HCT116 (cell line): ENCODE measurements at regions of chr11 and their contacts with region 1.

Region 1: GRCh38 chr11:447923-448731 is 2.0 kb upstream of the PTDSS2 start:
- DNase-seq: peak; percentile 80
- ATAC-seq: peak; percentile 70
- H3K4me3 ChIP-seq: peak overlapping the region; percentile 82 to 86
- H3K27ac ChIP-seq: peak overlapping the region; percentile 98
- H3K4me1 ChIP-seq: peaks cover 25 to 47% of the 10 kb centered on the region in 2 experiments
- H3K27me3 ChIP-seq: no peaks in the 10 kb centered on the region
- CTCF ChIP-seq: peak in 2 of 3 experiments; percentile 86 to 89; a peak in 4 of 6 replicates
- POLR2A ChIP-seq: peak; percentile 6
- RAD21 ChIP-seq: no peak

Region 2: DNA sequence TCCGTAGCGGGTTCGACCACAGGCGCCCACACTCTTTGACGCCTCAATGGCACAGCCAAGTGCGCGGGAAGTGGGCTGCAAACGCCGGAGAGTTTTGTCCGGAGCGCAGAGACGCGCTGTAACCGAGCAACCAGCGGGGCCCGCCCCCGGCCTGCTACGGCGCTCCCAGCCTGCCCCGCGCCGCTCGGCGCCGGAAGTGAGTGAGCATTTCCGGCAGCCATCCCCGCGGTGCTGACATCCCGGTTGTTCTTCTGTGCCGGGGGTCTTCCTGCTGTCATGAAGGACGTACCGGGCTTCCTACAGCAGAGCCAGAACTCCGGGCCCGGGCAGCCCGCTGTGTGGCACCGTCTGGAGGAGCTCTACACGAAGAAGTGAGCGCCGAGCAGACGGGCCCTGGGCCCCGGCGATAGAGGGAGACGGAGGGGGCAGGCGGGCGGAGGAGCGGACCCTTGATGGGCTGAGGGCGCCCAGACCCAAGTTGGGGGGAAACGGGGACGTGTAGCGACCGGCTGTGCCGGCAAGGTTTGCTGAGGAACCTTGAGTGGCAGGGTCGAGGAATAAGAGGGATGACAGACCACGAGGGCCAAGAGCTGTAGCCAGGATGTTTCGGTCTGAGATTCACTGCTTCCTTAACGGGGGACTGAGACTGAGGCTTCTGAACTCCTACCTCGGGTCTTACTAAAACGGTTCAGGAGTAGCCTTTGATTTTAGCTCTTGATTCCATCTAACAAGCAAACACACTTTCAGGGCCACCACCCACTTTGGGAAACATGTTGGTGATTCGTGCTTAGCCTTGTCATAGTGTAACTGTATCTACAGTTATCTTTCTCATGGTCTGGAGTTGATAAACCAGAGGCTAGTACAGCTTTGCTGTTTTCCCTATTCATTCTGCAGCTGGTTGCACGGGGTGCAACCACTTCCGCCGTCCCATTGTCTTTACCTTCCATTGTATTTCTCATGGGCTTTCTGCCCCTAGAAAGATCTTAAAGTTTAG is 211.1 kb before region 1 on chr11 and contains the start of gene PSMD13:
- CTCF ChIA-PET with region 1: no interaction called
- POLR2A ChIA-PET with region 1: no interaction called
- RAD21 ChIA-PET with region 1: no interaction called
- intact Hi-C with region 1: loop called (anchors 5 kb)
- DNase-seq: peak; percentile 56
- ATAC-seq: peak; percentile 88
- H3K4me3 ChIP-seq: peak within 1 kb of the TSS; percentile 76 to 94
- H3K27ac ChIP-seq: peak within 1 kb of the TSS; percentile 92
- H3K4me1 ChIP-seq: peaks cover 6 to 20% of the 10 kb centered on the region in 2 experiments; a peak in 3 of 4 replicates
- H3K27me3 ChIP-seq: no peaks in the 10 kb centered on the region
- CTCF ChIP-seq: no peak
- POLR2A ChIP-seq: peak; percentile 7
- RAD21 ChIP-seq: no peak
- total RNA-seq, gene PSMD13: 179 TPM

Region 3: GRCh38 chr11:304915-305843 is 142.9 kb before region 1 on chr11:
- CTCF ChIA-PET with region 1: interaction called, 10 read pairs
- POLR2A ChIA-PET with region 1: no interaction called
- RAD21 ChIA-PET with region 1: no interaction called
- intact Hi-C with region 1: loop called (anchors 1 kb)
- DNase-seq: no peak
- ATAC-seq: peak; percentile 46; the same call in 1 of the 2 replicates
- H3K4me3 ChIP-seq: no peak overlapping the region
- H3K27ac ChIP-seq: no peak overlapping the region
- H3K4me1 ChIP-seq: peaks cover 13 to 24% of the 10 kb centered on the region in 2 experiments
- H3K27me3 ChIP-seq: no peaks in the 10 kb centered on the region
- CTCF ChIP-seq: peak; percentile 64 to 68 (median 67); a peak in 5 of 6 replicates
- POLR2A ChIP-seq: no peak
- RAD21 ChIP-seq: peak; percentile 79

Region 4: DNA sequence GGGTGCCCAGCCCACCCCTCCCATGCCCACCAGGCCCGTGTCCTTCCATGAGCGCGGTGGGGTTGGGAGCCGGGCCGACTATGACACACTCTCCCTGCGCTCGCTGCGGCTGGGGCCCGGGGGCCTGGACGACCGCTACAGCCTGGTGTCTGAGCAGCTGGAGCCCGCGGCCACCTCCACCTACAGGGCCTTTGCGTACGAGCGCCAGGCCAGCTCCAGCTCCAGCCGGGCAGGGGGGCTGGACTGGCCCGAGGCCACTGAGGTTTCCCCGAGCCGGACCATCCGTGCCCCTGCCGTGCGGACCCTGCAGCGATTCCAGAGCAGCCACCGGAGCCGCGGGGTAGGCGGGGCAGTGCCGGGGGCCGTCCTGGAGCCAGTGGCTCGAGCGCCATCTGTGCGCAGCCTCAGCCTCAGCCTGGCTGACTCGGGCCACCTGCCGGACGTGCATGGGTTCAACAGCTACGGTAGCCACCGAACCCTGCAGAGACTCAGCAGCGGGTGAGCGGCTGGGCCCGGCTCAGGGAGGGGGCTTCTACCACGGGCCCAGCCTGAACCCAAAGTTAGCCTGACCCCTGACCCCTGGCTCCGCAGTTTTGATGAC is 51.1 kb before region 1 on chr11:
- CTCF ChIA-PET with region 1: no interaction called
- POLR2A ChIA-PET with region 1: no interaction called
- RAD21 ChIA-PET with region 1: interaction called in 1 of 2 experiments, 3 read pairs
- intact Hi-C with region 1: loop called (anchors 1 kb)
- DNase-seq: no peak
- ATAC-seq: no peak
- H3K4me3 ChIP-seq: no peak overlapping the region
- H3K27ac ChIP-seq: peak overlapping the region; percentile 32; the same call in 1 of the 2 replicates
- H3K4me1 ChIP-seq: peaks cover 21 to 36% of the 10 kb centered on the region in 2 experiments
- H3K27me3 ChIP-seq: no peaks in the 10 kb centered on the region
- CTCF ChIP-seq: no peak
- POLR2A ChIP-seq: no peak
- RAD21 ChIP-seq: no peak

Region 5: GRCh38 chr11:406978-407739 is 41.0 kb before region 1 on chr11:
- CTCF ChIA-PET with region 1: interaction called, 31 read pairs
- POLR2A ChIA-PET with region 1: interaction called, 10 read pairs
- RAD21 ChIA-PET with region 1: interaction called, 4 to 7 read pairs
- intact Hi-C with region 1: loop called (anchors 5 kb)
- DNase-seq: peak; percentile 69
- ATAC-seq: peak; percentile 80
- H3K4me3 ChIP-seq: peak overlapping the region; percentile 44 to 58
- H3K27ac ChIP-seq: peak overlapping the region; percentile 88
- H3K4me1 ChIP-seq: peaks cover 14 to 42% of the 10 kb centered on the region in 2 experiments
- H3K27me3 ChIP-seq: no peaks in the 10 kb centered on the region
- CTCF ChIP-seq: no peak
- POLR2A ChIP-seq: no peak
- RAD21 ChIP-seq: no peak

Region 6: GRCh38 chr11:416757-417621 is 31.1 kb before region 1 on chr11:
- CTCF ChIA-PET with region 1: interaction called, 11 read pairs
- POLR2A ChIA-PET with region 1: interaction called, 5 read pairs
- RAD21 ChIA-PET with region 1: interaction called in 1 of 2 experiments, 3 read pairs
- intact Hi-C with region 1: no loop called
- DNase-seq: no peak
- ATAC-seq: peak; percentile 85
- H3K4me3 ChIP-seq: peak overlapping the region; percentile 66 to 71
- H3K27ac ChIP-seq: peak overlapping the region; percentile 81
- H3K4me1 ChIP-seq: peaks cover 19 to 33% of the 10 kb centered on the region in 2 experiments
- H3K27me3 ChIP-seq: no peaks in the 10 kb centered on the region
- CTCF ChIP-seq: no peak
- POLR2A ChIP-seq: no peak
- RAD21 ChIP-seq: no peak

Region 7: DNA sequence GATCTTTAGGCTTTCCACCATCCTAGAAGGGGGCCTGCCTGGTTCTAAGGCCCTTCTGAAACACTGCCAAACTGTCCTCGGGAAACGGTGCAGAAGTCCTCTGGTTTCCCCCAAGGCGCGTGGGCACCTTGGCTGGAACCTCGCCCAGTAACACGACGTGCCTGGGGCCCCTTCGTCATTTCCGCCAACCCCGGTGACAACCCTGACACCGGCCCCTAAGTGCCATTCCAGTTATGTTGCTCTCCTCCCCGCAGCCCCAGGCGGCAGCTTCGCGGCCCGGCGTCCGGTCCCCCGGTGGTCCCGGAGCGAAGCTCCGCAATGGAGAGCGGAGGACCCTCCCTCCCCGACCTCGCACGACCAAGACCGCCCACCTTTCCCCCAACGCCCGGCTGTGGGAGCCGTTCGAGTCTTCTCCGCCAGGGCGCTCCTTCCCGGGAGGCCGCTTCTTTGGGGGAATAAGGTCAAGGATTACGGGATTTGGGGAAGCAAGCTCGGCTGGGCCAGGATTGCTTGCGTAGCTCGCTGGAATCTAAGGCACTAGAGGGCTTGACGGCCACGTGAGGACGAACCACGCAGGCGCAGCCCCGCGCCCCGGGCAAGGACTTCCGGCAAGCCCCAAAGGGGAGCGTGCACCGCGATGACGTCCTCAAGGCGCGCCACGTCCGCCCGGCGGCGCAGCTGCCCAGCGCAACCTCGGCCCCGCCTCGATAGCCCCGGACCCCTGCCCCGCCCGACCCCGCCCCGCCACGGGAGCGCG is 58.3 kb after region 1 on chr11:
- CTCF ChIA-PET with region 1: no interaction called
- POLR2A ChIA-PET with region 1: no interaction called
- RAD21 ChIA-PET with region 1: no interaction called
- intact Hi-C with region 1: loop called (anchors 5 kb)
- DNase-seq: peak; percentile 91
- ATAC-seq: peak; percentile 85
- H3K4me3 ChIP-seq: peak overlapping the region; percentile 96 to 98
- H3K27ac ChIP-seq: peak overlapping the region; percentile 95
- H3K4me1 ChIP-seq: peaks cover 6 to 22% of the 10 kb centered on the region in 2 experiments; a peak in 3 of 4 replicates
- H3K27me3 ChIP-seq: no peaks in the 10 kb centered on the region
- CTCF ChIP-seq: no peak
- POLR2A ChIP-seq: peak; percentile 64
- RAD21 ChIP-seq: no peak

Region 8: GRCh38 chr11:629237-629583 is 181.1 kb after region 1 on chr11:
- CTCF ChIA-PET with region 1: no interaction called
- POLR2A ChIA-PET with region 1: no interaction called
- RAD21 ChIA-PET with region 1: no interaction called
- intact Hi-C with region 1: no loop called
- DNase-seq: no peak
- ATAC-seq: no peak
- H3K4me3 ChIP-seq: no peak overlapping the region
- H3K27ac ChIP-seq: no peak overlapping the region
- H3K4me1 ChIP-seq: peaks cover 0 to 17% of the 10 kb centered on the region in 2 experiments; a peak in 2 of 4 replicates
- H3K27me3 ChIP-seq: no peaks in the 10 kb centered on the region
- CTCF ChIP-seq: no peak
- POLR2A ChIP-seq: no peak
- RAD21 ChIP-seq: no peak